ENCODE measurements at regions of chr2 and their contacts with region 1.

Region 1: DNA sequence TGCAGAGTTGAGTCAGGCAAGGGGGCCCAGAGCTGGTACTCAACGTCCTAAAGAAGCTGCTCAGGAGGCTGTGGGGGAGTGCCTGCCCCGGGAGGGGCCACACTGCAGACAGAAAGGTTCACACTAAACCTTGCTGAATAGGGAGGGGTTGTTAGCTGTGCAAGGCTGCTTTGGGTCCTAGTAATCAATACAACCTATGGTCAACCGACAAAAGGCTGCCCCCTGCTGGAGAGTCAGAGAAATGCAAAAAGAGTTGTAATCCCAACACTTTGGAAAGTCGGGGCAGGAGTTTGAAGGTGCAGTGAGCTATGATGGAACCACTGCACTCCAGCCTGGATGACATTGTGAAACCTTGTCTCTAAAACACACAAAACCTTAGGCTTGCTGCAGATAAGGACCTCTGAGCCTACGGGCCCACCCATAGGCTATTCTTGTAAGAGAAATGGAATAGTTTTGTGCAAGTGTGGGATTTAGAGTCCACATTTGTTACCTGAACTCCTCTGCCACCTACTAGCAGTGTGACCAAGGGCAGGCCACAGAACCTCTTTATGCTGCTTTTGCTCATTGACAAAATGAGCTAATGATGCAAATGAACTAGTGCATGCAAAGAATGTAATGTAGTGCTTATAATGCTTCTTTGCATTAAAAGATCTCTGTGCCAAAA is 81.5 kb downstream of the PRPF40A start:
- DNase-seq: peak; percentile 36 to 90
- H3K4me3 ChIP-seq: no peak overlapping the region
- H3K27ac ChIP-seq: no peak overlapping the region
- H3K4me1 ChIP-seq: no peaks in the 10 kb centered on the region
- H3K27me3 ChIP-seq: peaks cover 0 to 1% (median 0%) of the 10 kb centered on the region in 4 experiments; a peak in 1 of 7 replicates
- CTCF ChIP-seq: peak; percentile 32 to 82 (median 73)
- EP300 ChIP-seq: no peak
- POLR2A ChIP-seq: no peak
- RAD21 ChIP-seq: peak; percentile 87 to 88

Region 2: DNA sequence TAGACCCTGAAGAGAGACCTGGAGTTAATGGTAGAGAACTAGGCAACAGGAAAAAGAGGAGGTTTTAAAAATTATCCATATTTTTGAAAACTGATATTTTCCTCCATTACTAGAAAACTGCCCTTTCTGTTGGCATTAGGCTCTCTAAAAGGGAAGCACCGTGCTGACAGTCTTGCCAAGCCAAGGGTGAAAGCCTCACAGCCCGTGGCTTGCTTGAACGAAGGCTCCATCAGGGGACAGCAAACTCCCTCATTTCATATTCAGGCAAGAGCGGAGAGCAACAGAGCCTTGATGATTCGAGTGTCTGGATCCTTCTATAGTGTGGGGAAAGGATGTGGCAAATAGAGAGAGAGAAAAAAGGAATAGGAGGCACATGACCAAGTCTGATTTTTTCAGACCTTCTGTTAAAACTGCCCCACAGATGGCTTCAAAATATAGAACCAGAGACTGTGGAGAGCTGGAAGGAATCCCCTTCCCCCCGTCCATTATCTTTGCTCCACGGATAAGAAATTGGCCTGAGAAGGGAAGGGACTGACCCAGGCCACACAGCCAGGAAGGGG is 603.9 kb before region 1 on chr2:
- CTCF ChIA-PET with region 1: interaction called, 15 read pairs
- POLR2A ChIA-PET with region 1: no interaction called
- DNase-seq: no peak
- H3K4me3 ChIP-seq: no peak overlapping the region
- H3K27ac ChIP-seq: no peak overlapping the region
- H3K4me1 ChIP-seq: peaks cover 6 to 18% (median 13%) of the 10 kb centered on the region in 4 experiments; a peak in 6 of 7 replicates
- H3K27me3 ChIP-seq: peaks cover 0 to 40% (median 18%) of the 10 kb centered on the region in 4 experiments; a peak in 5 of 7 replicates
- CTCF ChIP-seq: no peak
- EP300 ChIP-seq: no peak
- POLR2A ChIP-seq: no peak
- RAD21 ChIP-seq: no peak

Region 3: GRCh38 chr2:152175458-152176325 is 460.1 kb before region 1 on chr2 and contains the start of gene STAM2:
- CTCF ChIA-PET with region 1: interaction called, 30 read pairs
- POLR2A ChIA-PET with region 1: interaction called, 4 read pairs
- DNase-seq: peak; percentile 80 to 98
- H3K4me3 ChIP-seq: peak within 1 kb of the TSS; percentile 64 to 95 (median 89)
- H3K27ac ChIP-seq: peak within 1 kb of the TSS; percentile 97
- H3K4me1 ChIP-seq: peaks cover 0 to 4% (median 0%) of the 10 kb centered on the region in 4 experiments; a peak in 1 of 7 replicates
- H3K27me3 ChIP-seq: peaks cover 1 to 3% (median 2%) of the 10 kb centered on the region in 4 experiments; a peak in 3 of 7 replicates
- CTCF ChIP-seq: peak; percentile 89 to 93 (median 89)
- EP300 ChIP-seq: no peak
- POLR2A ChIP-seq: peak in 1 of 2 experiments; percentile 70; a peak in 2 of 3 replicates
- RAD21 ChIP-seq: peak; percentile 95 to 96
- total RNA-seq, gene STAM2: 9.4 and 9.9 TPM in 2 replicates

Region 4: DNA sequence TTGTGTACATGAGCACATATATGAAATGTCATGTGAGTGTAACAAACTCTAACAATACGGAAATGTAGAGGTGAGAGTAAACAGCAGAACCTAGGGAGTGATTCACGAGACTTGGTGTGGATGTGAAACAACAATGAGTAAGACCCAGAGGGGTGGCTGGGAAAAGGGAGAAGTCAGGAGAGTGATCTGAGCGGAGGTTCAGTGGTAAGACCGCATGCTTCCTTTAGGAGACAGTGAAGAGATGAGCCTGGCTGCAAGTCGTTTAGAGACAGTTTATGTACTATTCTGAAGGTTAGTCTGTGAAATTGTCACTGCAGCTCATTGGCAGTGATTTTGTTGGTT is 69.1 kb before region 1 on chr2:
- CTCF ChIA-PET with region 1: interaction called, 10 read pairs
- POLR2A ChIA-PET with region 1: no interaction called
- DNase-seq: no peak
- H3K4me3 ChIP-seq: no peak overlapping the region
- H3K27ac ChIP-seq: no peak overlapping the region
- H3K4me1 ChIP-seq: peaks cover 0 to 3% (median 0%) of the 10 kb centered on the region in 4 experiments; a peak in 2 of 7 replicates
- H3K27me3 ChIP-seq: no peaks in the 10 kb centered on the region
- CTCF ChIP-seq: no peak
- EP300 ChIP-seq: no peak
- POLR2A ChIP-seq: no peak
- RAD21 ChIP-seq: no peak

Region 5: DNA sequence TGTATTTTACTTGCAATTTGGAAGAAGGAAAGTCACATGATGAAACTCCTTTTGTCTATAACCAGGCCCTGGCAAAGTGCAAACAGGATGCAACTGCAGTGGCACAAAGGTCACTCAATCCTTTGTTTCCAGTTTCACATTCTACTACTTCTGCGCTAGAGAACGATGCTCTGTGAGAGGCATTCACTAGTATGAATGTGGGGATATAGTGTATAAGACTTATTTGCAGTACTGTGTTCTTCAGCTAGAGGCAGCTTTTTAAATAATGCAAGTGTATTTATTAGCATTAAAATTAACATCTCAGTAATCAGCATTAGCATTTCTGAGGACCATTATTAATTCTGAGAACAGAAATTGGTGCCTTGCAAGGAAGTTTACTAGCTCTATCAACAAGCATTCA is 12.6 kb after region 1 on chr2:
- CTCF ChIA-PET with region 1: interaction called, 44 read pairs
- POLR2A ChIA-PET with region 1: interaction called, 7 read pairs
- DNase-seq: no peak
- H3K4me3 ChIP-seq: no peak overlapping the region
- H3K27ac ChIP-seq: no peak overlapping the region
- H3K4me1 ChIP-seq: peaks cover 0 to 4% (median 1%) of the 10 kb centered on the region in 4 experiments; a peak in 1 of 7 replicates
- H3K27me3 ChIP-seq: no peaks in the 10 kb centered on the region
- CTCF ChIP-seq: no peak
- EP300 ChIP-seq: no peak
- POLR2A ChIP-seq: peak in 1 of 2 experiments; percentile 22; a peak in 1 of 3 replicates
- RAD21 ChIP-seq: no peak